WTC11 (cell line): ENCODE measurements at regions of chr12 and their contacts with region 1.

Region 1: DNA sequence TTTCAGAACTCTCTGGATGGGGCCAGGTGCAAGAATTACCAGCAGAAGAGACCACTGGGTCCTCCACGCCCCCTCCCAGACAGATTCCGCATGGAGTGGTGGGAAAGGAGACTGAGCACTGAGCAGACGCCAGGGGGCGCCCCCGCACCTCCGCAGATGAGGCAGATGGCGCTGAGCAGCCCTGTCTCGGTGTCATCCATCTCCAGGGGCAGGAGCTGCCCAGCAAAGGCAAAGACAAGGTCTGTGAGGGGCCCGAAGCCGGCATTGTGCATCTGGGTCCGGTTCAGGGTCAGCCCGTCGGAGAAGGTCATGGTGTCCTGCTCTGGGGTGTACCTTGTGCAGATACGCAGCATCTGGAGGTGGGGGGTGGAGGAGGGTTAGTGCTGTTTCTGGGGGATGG is 6.3 kb upstream of the ITGB7 start:
- DNase-seq: peak; percentile 93
- ATAC-seq: peak; percentile 59
- H3K4me3 Mint-ChIP-seq: 0 out of 2 replicates have a peak overlapping the region, but pooled peaks have one; percentile 2
- H3K27ac Mint-ChIP-seq: peak overlapping the region; percentile 63; the same call in 1 of the 2 replicates
- H3K4me1 Mint-ChIP-seq: peaks cover 57% of the 10 kb centered on the region
- H3K27me3 Mint-ChIP-seq: no peaks in the 10 kb centered on the region
- CTCF ChIP-seq: peak; percentile 97

Region 2: DNA sequence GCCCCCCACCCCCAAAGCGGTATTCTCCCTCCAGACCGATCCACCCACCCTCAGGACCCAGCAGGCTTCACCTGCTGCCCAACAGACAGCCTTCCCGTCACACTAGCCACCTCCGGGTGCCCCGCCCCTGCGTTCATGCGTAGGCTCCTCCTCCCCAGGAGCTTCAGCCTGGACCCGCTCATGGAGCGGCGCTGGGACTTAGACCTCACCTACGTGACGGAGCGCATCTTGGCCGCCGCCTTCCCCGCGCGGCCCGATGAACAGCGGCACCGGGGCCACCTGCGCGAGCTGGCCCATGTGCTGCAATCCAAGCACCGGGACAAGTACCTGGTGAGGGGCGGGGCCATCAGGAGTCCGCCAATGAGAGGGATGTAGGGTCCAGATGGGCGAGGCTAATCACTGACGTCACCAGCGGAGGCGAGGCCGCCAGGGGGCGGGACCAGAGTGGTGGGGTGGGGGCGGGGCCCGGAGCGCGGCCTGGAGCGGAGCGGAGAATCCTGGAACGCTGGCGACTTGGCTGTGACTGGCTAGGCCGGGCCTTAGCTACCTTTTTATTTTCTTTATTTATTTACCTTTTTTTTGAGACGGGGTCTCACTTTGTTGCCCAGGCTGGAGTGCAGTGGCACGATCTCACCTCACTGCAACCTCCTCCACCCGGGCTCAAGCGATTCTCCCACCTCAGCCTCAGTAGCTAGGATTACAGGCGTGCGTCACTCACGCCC is 159.1 kb before region 1 on chr12:
- CTCF ChIA-PET with region 1: interaction called, 13 read pairs
- POLR2A ChIA-PET with region 1: interaction called, 4 read pairs
- DNase-seq: peak; percentile 97
- ATAC-seq: peak; percentile 75
- H3K4me3 Mint-ChIP-seq: peak overlapping the region; percentile 94
- H3K27ac Mint-ChIP-seq: peak overlapping the region; percentile 98
- H3K4me1 Mint-ChIP-seq: peaks cover 31% of the 10 kb centered on the region
- H3K27me3 Mint-ChIP-seq: peaks cover 40% of the 10 kb centered on the region
- CTCF ChIP-seq: no peak

Region 3: DNA sequence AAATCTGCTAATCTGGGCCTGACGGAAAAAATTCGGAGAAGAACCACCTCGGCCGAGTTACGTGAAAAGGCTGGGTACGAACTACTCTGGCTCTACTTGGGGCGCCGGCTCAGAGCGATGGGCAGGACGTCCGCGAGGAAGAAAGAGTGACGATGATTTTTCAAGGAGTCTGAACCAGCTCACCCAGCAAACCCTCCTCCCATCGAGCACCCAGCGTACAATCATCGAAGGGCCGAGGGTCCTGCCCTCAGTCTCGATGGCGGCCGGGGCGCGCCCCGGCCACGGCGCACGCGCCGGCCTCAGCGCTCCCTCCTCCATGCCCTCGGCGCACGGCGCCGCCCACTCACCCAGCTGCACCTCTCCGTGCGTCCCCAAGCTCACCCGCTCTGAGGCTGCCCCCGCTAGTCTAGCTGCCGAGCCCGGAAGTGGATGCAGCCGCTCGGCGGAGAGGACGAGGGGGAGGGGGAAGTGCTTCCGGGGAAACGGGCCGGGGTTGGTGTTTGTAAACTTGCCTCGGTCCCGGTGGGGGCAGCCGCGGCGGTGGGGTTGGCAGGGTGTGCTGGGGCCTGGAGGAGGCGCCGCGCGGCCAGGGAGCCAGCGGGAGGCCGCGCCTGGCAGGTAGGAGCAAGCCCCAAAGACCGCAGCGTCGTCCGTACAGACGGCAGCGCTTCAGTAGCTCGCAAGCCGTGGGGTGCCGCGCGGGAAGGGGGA is 33.0 kb before region 1 on chr12 and contains the starts of genes CSAD and ZNF740:
- CTCF ChIA-PET with region 1: interaction called, 16 read pairs
- POLR2A ChIA-PET with region 1: no interaction called
- DNase-seq: peak; percentile 96
- ATAC-seq: peak; percentile 97
- H3K4me3 Mint-ChIP-seq: peak within 1 kb of the TSS; percentile 91
- H3K27ac Mint-ChIP-seq: peak within 1 kb of the TSS; percentile 93
- H3K4me1 Mint-ChIP-seq: peaks cover 24% of the 10 kb centered on the region
- H3K27me3 Mint-ChIP-seq: peaks cover 48% of the 10 kb centered on the region
- CTCF ChIP-seq: no peak
- total RNA-seq, gene CSAD: 11.5 to 12.6 TPM (median 12.3 TPM) in 3 replicates
- total RNA-seq, gene ZNF740: 26.6 to 36.6 TPM (median 36.1 TPM) in 3 replicates

Region 4: DNA sequence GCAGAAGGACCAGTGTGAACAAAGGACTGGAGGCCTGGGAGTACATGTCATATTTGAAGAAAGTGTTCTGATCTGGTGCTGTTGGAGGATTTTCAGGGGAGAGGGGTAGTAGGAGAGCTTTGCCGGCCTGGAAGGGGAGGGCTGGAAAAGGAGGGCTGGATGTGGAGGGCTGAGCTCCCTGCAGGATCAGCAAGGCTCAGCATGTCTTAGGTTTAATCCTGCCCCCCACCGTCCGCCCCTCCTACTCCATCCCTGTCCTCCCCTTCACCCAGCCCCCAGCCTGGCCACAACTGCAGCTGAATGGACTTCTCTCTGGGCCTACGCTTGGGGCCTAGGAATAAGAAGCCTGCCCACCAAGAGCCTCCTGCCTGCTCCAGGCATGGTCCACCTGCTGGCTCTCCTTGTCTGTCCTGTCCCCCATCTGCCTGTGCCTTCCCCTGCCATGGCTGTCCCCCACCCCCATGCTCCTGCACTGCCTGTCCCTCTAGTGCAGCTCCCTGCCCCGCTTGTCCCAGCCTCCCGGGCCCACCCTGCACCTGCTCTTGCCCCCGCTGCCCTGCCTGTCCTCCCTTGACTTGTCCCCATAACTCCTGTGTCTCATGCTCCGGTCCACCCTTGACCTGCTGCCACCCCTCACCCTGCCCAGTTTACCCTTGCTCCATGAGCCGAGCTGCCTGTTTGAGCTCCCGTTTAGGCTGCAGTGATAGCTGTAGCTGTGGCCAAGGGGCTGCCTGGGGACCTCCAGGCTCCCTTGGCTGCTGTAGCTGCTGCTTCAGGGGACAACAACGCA is 28.5 kb after region 1 on chr12:
- CTCF ChIA-PET with region 1: interaction called, 138 read pairs
- POLR2A ChIA-PET with region 1: interaction called, 4 read pairs
- DNase-seq: peak; percentile 66
- ATAC-seq: peak; percentile 75
- H3K4me3 Mint-ChIP-seq: 0 out of 2 replicates have a peak overlapping the region, but pooled peaks have one; percentile 6
- H3K27ac Mint-ChIP-seq: peak overlapping the region; percentile 18; the same call in 1 of the 2 replicates
- H3K4me1 Mint-ChIP-seq: peaks cover 45% of the 10 kb centered on the region
- H3K27me3 Mint-ChIP-seq: peaks cover 2% of the 10 kb centered on the region; the same call in 1 of the 2 replicates
- CTCF ChIP-seq: no peak

Region 5: GRCh38 chr12:53267999-53268647 is 54.8 kb after region 1 on chr12 and contains the start of gene ESPL1:
- CTCF ChIA-PET with region 1: interaction called, 333 read pairs
- POLR2A ChIA-PET with region 1: interaction called, 13 read pairs
- DNase-seq: peak; percentile 89
- ATAC-seq: peak; percentile 88
- H3K4me3 Mint-ChIP-seq: peak within 1 kb of the TSS; percentile 100
- H3K27ac Mint-ChIP-seq: peak within 1 kb of the TSS; percentile 86
- H3K4me1 Mint-ChIP-seq: peaks cover 29% of the 10 kb centered on the region
- H3K27me3 Mint-ChIP-seq: no peaks in the 10 kb centered on the region; the same call in 1 of the 2 replicates
- CTCF ChIP-seq: peak; percentile 26; the same call in 1 of the 2 replicates
- total RNA-seq, gene ESPL1: 41.5 to 61.4 TPM (median 48.5 TPM) in 3 replicates

Region 6: GRCh38 chr12:53295070-53295890 is 81.9 kb after region 1 on chr12 and contains the start of gene PFDN5:
- CTCF ChIA-PET with region 1: interaction called, 161 read pairs
- POLR2A ChIA-PET with region 1: interaction called, 3 read pairs
- DNase-seq: peak; percentile 85
- ATAC-seq: peak; percentile 85
- H3K4me3 Mint-ChIP-seq: peak within 1 kb of the TSS; percentile 99
- H3K27ac Mint-ChIP-seq: peak within 1 kb of the TSS; percentile 96
- H3K4me1 Mint-ChIP-seq: peaks cover 18% of the 10 kb centered on the region
- H3K27me3 Mint-ChIP-seq: no peaks in the 10 kb centered on the region
- CTCF ChIP-seq: no peak
- total RNA-seq, gene PFDN5: 263 to 286 TPM (median 270 TPM) in 3 replicates

Region 7: DNA sequence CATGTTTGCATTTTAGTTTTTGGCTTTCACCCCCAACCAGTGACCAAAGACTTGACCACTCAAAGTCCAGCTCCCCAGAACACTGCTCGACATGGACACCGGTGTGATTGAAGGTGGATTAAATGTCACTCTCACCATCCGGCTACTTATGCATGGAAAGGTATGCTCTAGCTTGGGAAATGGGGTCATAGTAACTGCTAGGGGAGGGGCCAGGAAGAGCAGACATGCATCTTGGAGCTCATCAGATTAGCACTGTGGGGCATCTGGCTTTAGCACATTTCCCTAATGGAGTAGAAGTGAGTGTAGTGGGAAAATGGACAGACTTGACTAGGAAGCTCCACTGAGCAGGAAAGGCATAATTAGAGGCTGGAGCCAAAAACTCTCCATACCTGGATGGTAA is 241.4 kb after region 1 on chr12:
- CTCF ChIA-PET with region 1: no interaction called
- POLR2A ChIA-PET with region 1: no interaction called
- DNase-seq: no peak
- ATAC-seq: no peak
- H3K4me3 Mint-ChIP-seq: peak overlapping the region; percentile 96
- H3K27ac Mint-ChIP-seq: peak overlapping the region; percentile 92
- H3K4me1 Mint-ChIP-seq: peaks cover 28% of the 10 kb centered on the region
- H3K27me3 Mint-ChIP-seq: no peaks in the 10 kb centered on the region
- CTCF ChIP-seq: no peak